Uterus (tissue), 4 donors: ENCODE measurements at regions of chr6 and their contacts with region 1.

Region 1: GRCh38 chr6:168157272-168158007 is 78.4 kb upstream of the FRMD1 start:
- DNase-seq: peak; percentile 70 to 82
- H3K4me3 ChIP-seq: no peak overlapping the region
- H3K27ac ChIP-seq: peak overlapping the region; percentile 80 to 86
- H3K4me1 ChIP-seq: peaks cover 5 to 6% of the 10 kb centered on the region in 2 donors
- H3K27me3 ChIP-seq: no peaks in the 10 kb centered on the region
- CTCF ChIP-seq: no peak
- POLR2A ChIP-seq: no peak

Region 2: GRCh38 chr6:168355716-168356449 is 198.4 kb after region 1 on chr6:
- intact Hi-C with region 1: loop called (anchors 10 kb)
- DNase-seq: peak; percentile 69 to 71
- H3K4me3 ChIP-seq: no peak overlapping the region
- H3K27ac ChIP-seq: no peak overlapping the region
- H3K4me1 ChIP-seq: no peaks in the 10 kb centered on the region
- H3K27me3 ChIP-seq: no peaks in the 10 kb centered on the region
- CTCF ChIP-seq: peak; percentile 76 to 90 (median 79)
- POLR2A ChIP-seq: no peak